Activated CD4-positive, alpha-beta memory T cell treated with anti-CD3 and anti-CD28 coated beads, Interleukin-2, amount 10 ng/mL, durations not matched to agents 7 days and 5 days (primary cell): ENCODE measurements at regions of chr2 and their contacts with region 1.

Region 1: GRCh38 chr2:172131713-172132555 is 29.2 kb upstream of the DLX2 start:
- DNase-seq: no peak
- H3K4me3 Mint-ChIP-seq: no peak overlapping the region
- H3K27ac Mint-ChIP-seq: no peak overlapping the region
- H3K4me1 Mint-ChIP-seq: no peaks in the 10 kb centered on the region
- H3K27me3 Mint-ChIP-seq: peaks cover 12% of the 10 kb centered on the region

Region 2: GRCh38 chr2:171574149-171574795 is 557.7 kb before region 1 on chr2:
- CTCF ChIA-PET with region 1: interaction called, 17 read pairs
- POLR2A ChIA-PET with region 1: interaction called, 3 read pairs
- DNase-seq: peak; percentile 84
- H3K4me3 Mint-ChIP-seq: no peak overlapping the region
- H3K27ac Mint-ChIP-seq: no peak overlapping the region
- H3K4me1 Mint-ChIP-seq: peaks cover 8% of the 10 kb centered on the region
- H3K27me3 Mint-ChIP-seq: no peaks in the 10 kb centered on the region

Region 3: DNA sequence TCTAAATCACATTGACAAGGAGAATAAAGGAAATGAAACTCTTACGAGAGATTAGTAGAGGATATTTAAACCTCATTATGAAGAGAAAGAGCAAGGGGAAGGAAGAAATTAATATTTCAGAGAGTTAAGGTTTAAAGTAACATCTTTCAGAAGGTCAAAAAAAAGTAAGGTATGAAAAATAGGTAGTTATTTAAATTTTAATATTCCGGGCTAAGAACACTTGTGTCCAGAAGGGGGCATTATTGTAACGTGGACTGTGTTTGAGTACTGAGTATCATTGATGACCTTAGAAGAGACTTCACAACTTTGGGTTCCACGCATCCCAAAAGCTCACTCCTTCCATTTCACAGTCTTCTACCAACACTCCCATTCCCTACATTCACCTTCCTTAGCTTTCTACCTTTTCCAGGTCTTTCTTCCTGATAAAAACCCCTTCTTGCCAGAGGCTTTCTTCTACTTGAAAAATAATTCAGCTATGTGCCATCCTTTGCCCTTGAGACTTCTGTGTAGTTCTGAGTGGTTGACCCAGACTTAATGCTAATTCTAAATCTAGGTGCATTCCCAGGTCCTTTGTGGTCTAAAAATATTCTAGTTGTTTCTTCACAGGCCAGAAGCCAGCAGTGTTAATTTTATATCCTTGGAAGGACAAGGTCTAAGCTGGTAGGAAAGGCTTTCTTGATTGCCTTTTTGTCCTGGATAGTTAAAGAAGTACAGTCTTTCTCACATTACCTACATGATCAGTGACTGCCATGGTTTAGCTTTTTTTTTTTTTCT is 428.2 kb before region 1 on chr2:
- CTCF ChIA-PET with region 1: interaction called, 64 read pairs
- POLR2A ChIA-PET with region 1: no interaction called
- DNase-seq: no peak
- H3K4me3 Mint-ChIP-seq: no peak overlapping the region
- H3K27ac Mint-ChIP-seq: no peak overlapping the region
- H3K4me1 Mint-ChIP-seq: peaks cover 1% of the 10 kb centered on the region
- H3K27me3 Mint-ChIP-seq: no peaks in the 10 kb centered on the region

Region 4: DNA sequence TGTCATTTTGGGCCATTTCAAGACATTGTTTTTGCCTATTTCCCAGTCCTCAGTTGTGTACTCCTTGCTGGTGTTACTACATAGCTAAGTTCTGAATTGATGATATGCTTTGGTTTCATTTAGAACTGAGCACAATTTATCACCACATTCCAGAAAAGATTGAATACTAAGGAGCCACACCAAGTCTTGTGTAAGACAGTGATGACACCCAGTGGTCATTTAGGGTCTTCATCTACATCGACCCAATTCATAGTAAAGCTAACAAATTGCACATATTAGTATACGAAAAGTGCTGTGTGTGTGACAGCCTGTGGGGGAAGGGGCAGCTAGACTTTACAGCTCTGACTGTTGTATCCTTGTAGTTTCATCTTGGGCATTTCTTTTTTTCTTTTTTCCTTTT is 18.3 kb before region 1 on chr2:
- CTCF ChIA-PET with region 1: interaction called, 27 read pairs
- POLR2A ChIA-PET with region 1: no interaction called
- DNase-seq: no peak
- H3K4me3 Mint-ChIP-seq: no peak overlapping the region
- H3K27ac Mint-ChIP-seq: no peak overlapping the region
- H3K4me1 Mint-ChIP-seq: no peaks in the 10 kb centered on the region
- H3K27me3 Mint-ChIP-seq: peaks cover 33% of the 10 kb centered on the region